ENCODE measurements at regions of chr17 and their contacts with region 1.

Region 1: GRCh38 chr17:80720610-80721577 is 176.3 kb downstream of the RPTOR start:
- DNase-seq: peak; percentile 82
- H3K4me3 ChIP-seq: no peak overlapping the region
- H3K27ac ChIP-seq: peak overlapping the region; percentile 82
- H3K4me1 ChIP-seq: peaks cover 54% of the 10 kb centered on the region
- H3K27me3 ChIP-seq: no peaks in the 10 kb centered on the region
- CTCF ChIP-seq: no peak

Region 2: DNA sequence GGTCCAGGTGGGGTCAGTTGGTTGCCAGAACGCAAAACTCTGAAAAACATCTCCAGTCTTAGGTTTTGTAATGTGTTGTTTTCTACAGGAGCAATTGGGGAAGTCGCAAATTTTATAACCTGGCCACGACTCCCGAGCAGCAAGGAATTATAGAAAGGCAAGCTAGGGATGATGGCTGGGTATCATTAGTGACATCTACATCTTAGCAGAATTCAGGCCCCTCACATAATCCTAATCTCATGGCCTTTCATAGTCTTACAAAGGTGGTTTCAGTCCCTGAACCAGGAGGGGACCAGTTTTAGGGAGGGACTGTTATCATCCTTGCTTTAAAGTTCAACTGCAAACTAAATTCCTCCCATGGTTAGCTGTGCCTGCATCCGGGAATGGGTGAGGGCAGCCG is 58.3 kb before region 1 on chr17:
- CTCF ChIA-PET with region 1: no interaction called
- dilution Hi-C with region 1: no loop called
- in situ Hi-C with region 1: no loop called
- intact Hi-C with region 1: no loop called
- DNase-seq: no peak
- H3K4me3 ChIP-seq: no peak overlapping the region
- H3K27ac ChIP-seq: no peak overlapping the region
- H3K4me1 ChIP-seq: no peaks in the 10 kb centered on the region
- H3K27me3 ChIP-seq: no peaks in the 10 kb centered on the region
- CTCF ChIP-seq: no peak

Region 3: DNA sequence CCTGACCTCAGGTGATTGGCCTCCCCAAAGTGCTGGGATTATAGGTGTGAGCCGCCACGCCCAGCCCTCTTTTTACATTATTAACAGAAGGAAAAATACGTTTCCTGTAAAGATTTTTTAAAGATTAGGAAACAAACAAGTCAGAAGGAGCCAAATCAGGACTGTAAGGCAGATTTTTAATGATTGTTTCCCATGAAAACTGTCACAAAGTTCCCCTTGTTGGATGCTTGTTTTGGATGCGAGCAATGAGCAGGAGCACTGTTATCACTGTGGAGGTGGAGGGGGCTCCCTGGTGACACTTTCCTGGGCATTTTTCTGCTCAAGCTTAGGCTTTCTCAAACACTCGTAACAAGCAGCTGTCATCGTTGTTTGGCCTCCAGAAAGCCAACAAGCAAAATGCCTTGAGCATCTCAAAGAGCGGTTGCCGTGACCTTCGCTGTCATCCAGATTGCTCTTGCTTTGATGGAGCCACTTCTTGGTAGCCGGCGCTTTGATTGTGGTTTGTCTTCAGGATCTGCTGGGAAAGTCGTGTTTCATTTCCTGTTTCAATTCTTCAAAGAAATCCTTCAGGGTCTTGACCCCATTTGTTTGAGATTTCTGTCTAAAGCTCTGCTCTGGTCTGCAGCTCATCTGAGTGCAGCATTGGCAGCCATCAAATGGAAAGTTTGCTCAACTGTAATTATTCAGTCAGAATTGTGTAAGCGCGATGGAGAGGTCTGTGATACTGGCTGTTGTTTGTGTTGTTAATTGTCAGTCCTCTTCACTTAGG is 47.6 kb before region 1 on chr17:
- CTCF ChIA-PET with region 1: no interaction called
- dilution Hi-C with region 1: loop called (anchors 5 kb)
- in situ Hi-C with region 1: no loop called
- intact Hi-C with region 1: no loop called
- DNase-seq: no peak
- H3K4me3 ChIP-seq: no peak overlapping the region
- H3K27ac ChIP-seq: no peak overlapping the region
- H3K4me1 ChIP-seq: peaks cover 11% of the 10 kb centered on the region
- H3K27me3 ChIP-seq: no peaks in the 10 kb centered on the region
- CTCF ChIP-seq: no peak

Region 4: GRCh38 chr17:80694992-80695912 is 25.6 kb before region 1 on chr17:
- CTCF ChIA-PET with region 1: no interaction called
- dilution Hi-C with region 1: loop called (anchors 5 kb)
- in situ Hi-C with region 1: no loop called
- intact Hi-C with region 1: no loop called
- DNase-seq: no peak
- H3K4me3 ChIP-seq: no peak overlapping the region
- H3K27ac ChIP-seq: no peak overlapping the region
- H3K4me1 ChIP-seq: peaks cover 9% of the 10 kb centered on the region
- H3K27me3 ChIP-seq: no peaks in the 10 kb centered on the region
- CTCF ChIP-seq: no peak

Region 5: GRCh38 chr17:80970044-80970761 is 249.3 kb after region 1 on chr17:
- CTCF ChIA-PET with region 1: no interaction called
- dilution Hi-C with region 1: loop called (anchors 25 kb)
- in situ Hi-C with region 1: no loop called
- intact Hi-C with region 1: no loop called
- DNase-seq: no peak
- H3K4me3 ChIP-seq: no peak overlapping the region
- H3K27ac ChIP-seq: no peak overlapping the region
- H3K4me1 ChIP-seq: no peaks in the 10 kb centered on the region
- H3K27me3 ChIP-seq: no peaks in the 10 kb centered on the region
- CTCF ChIP-seq: peak; percentile 32 to 62